CD8-positive, alpha-beta memory T cell (primary cell): ENCODE measurements at regions of chr7 and their contacts with region 1.

Region 1: DNA sequence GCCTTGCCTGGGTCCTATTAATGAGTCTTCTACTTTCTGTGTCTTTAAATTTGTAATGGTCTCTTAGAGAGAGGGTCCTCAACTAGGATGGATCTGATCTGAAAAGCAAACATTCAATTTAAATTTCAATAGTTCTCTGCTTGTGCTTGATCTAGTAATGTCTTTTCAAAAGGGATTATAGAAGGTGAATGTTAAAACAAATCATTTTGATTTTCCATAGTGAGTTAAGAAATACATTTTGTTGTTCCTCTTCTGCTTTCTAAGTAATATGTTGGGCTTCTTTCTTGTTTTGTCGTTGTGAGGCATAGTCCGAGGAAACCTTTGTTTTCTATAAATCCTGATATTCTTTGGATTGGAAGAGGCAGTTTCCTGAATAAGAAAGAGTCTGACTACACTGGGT is 18.8 kb downstream of the NRF1 start:
- DNase-seq: no peak
- H3K4me3 ChIP-seq: no peak overlapping the region
- H3K4me3 Mint-ChIP-seq: no peak overlapping the region
- H3K27ac ChIP-seq: no peak overlapping the region
- H3K27ac Mint-ChIP-seq: peak overlapping the region in 1 of 8 donors; percentile 30
- H3K4me1 ChIP-seq: peaks cover 3% of the 10 kb centered on the region
- H3K4me1 Mint-ChIP-seq: peaks cover 43 to 77% (median 69%) of the 10 kb centered on the region in 3 donors
- H3K27me3 ChIP-seq: no peaks in the 10 kb centered on the region
- H3K27me3 Mint-ChIP-seq: no peaks in the 10 kb centered on the region

Region 2: DNA sequence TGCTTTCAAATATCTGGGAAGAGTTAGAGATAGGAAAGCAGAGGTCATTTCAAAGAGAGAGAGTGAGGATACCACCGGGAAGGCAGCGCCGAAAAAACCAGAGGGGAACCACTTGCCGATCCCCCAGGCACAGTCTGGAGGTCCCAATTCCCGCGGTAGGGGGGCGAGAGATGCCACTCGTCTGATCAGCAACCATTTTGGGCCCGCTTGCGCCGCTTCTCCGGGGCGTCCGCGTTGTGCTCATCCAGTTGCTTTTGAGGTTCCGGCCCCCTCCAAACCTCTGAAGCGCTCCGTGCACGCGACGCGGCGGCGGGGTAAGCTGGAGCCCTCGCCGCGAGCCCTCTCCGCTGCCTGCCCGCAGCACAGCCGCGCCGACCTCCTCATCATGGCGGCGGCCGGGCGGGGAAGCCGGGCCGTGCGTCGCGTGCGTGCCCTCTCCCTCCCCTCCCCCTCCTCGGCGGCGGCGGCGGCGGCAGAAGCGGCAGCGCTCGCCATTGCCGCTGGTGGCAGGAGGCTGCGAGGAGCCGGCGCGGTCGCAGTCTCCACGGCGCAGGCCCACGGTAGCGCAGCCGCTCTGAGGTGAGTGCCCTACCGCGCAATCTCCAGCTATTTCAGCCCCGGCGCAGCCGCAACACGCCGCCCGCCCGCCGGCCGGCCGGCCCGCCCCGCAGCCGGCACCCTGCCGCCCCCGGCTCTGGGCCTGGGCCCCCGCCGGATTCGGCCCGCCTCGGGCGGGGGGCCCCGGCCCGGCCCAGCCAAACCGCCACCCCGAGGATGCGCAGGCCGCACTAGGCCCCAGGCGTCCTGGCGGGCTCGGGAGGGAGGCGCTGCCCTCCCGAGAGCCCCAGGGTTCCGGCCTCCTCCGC is 18.9 kb before region 1 on chr7 and contains the start of gene NRF1:
- CTCF ChIA-PET with region 1: interaction called, 15 read pairs
- POLR2A ChIA-PET with region 1: no interaction called
- DNase-seq: peak; percentile 87 to 95 (median 92)
- H3K4me3 ChIP-seq: peak within 1 kb of the TSS; percentile 94
- H3K4me3 Mint-ChIP-seq: peak within 1 kb of the TSS; percentile 93 to 99 (median 98)
- H3K27ac ChIP-seq: peak within 1 kb of the TSS; percentile 88
- H3K27ac Mint-ChIP-seq: peak within 1 kb of the TSS; percentile 96 to 99 (median 98)
- H3K4me1 ChIP-seq: peaks cover 45% of the 10 kb centered on the region
- H3K4me1 Mint-ChIP-seq: peaks cover 48 to 77% (median 65%) of the 10 kb centered on the region in 3 donors
- H3K27me3 ChIP-seq: no peaks in the 10 kb centered on the region
- H3K27me3 Mint-ChIP-seq: no peaks in the 10 kb centered on the region
- total RNA-seq, gene NRF1: 22.6 to 23.7 TPM